ENCODE measurements at regions of chr20 and their contacts with region 1.

Region 1: GRCh38 chr20:21767739-21768223 is 62.3 kb downstream of the PAX1 start:
- DNase-seq: peak; percentile 86
- ATAC-seq: peak; percentile 98
- H3K4me3 ChIP-seq: peak overlapping the region in 1 of 3 experiments; percentile 29; a peak in 1 of 6 replicates
- H3K27ac ChIP-seq: no peak overlapping the region
- H3K4me1 ChIP-seq: peaks cover 11% of the 10 kb centered on the region
- H3K27me3 ChIP-seq: peaks cover 5 to 55% of the 10 kb centered on the region in 2 experiments; a peak in 4 of 5 replicates
- CTCF ChIP-seq: peak; percentile 89
- EP300 ChIP-seq: 0 out of 4 replicates have a peak, but pooled peaks of 1 of the 2 experiments have one; percentile 20
- POLR2A ChIP-seq: no peak
- RAD21 ChIP-seq: 0 out of 2 replicates have a peak, but pooled peaks have one; percentile 49

Region 2: DNA sequence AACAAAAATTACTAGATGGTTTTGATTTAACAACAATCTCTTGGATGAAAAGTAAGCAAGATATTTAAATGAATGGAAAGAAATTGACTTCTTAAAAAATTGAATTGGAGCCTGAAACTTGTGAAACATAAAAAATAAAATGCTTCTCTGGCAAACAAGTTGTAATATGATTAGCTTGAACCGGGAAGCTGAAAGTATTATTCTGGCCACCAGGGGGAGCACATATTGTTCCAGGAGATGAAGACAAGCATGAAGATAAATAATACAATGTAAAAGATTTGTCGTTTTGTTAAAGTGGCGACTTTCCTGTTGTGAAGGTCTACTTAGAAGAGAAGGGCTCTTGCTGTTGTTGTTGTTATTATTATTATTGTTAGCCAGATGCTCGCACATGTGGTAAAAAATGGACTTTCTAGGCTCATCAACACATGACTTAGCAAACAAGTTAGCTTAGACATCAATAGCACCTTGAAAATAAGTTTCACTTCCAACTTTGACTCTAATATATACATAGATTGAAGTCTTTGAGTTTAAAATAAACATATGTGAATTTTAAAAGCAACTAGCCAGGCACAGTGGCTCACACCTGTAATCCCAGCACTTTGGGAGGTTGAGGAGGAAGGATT is 48.1 kb before region 1 on chr20:
- CTCF ChIA-PET with region 1: interaction called, 5 read pairs
- POLR2A ChIA-PET with region 1: no interaction called
- in situ Hi-C with region 1: no loop called
- intact Hi-C with region 1: loop called (anchors 1 kb)
- DNase-seq: peak; percentile 68
- ATAC-seq: peak; percentile 58; the same call in 2 of the 3 replicates
- H3K4me3 ChIP-seq: no peak overlapping the region
- H3K27ac ChIP-seq: no peak overlapping the region
- H3K4me1 ChIP-seq: no peaks in the 10 kb centered on the region
- H3K27me3 ChIP-seq: peaks cover 1 to 35% of the 10 kb centered on the region in 2 experiments
- CTCF ChIP-seq: peak; percentile 71
- EP300 ChIP-seq: no peak
- POLR2A ChIP-seq: no peak
- RAD21 ChIP-seq: no peak

Measured in HepG2 (cell line).